Activated naive CD4-positive, alpha-beta T cell treated with anti-CD3 and anti-CD28 coated beads for 36 hours (primary cell): ENCODE measurements at regions of chr5 and their contacts with region 1.

Region 1: DNA sequence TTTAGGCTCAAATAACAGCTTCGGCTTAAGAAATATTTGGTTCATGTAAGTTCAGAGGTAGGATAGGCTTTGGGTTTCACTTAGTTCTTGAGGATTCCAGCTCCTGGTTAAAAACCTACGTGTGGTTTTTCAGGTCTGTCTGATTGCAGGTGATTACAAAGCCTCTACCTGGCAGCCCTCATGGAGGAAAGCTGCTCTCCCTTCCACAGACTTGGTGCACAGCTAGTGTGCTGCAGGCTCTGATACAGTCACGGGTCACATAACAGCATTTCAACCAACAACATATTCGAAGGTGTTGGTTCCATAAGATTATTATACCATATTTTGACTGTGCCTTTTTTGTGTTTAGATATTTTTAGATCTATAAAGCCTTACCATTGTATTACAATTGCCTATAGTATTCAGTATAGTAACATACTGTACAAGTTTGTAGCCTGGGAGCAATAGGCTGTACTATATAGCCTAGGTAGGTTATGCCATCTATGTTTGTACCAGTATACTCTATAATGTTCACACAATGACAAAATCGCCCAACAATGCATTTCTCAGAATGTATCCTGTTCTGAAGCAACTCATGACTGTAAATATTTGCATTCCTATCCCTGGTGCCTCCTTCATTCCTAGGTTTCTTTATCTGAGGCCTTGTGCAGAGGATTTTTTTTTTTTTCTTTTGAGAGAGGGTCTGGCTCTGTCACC is 8.0 kb upstream of the DCP2 start:
- DNase-seq: no peak
- H3K4me3 Mint-ChIP-seq: no peak overlapping the region
- H3K27ac Mint-ChIP-seq: no peak overlapping the region
- H3K4me1 Mint-ChIP-seq: peaks cover 18% of the 10 kb centered on the region
- H3K27me3 Mint-ChIP-seq: no peaks in the 10 kb centered on the region

Region 2: GRCh38 chr5:112691758-112692157 is 276.8 kb before region 1 on chr5:
- CTCF ChIA-PET with region 1: interaction called, 6 read pairs
- intact Hi-C with region 1: loop called (anchors 1 kb)
- DNase-seq: peak; percentile 63
- H3K4me3 Mint-ChIP-seq: no peak overlapping the region
- H3K27ac Mint-ChIP-seq: no peak overlapping the region
- H3K4me1 Mint-ChIP-seq: no peaks in the 10 kb centered on the region
- H3K27me3 Mint-ChIP-seq: peaks cover 4% of the 10 kb centered on the region

Region 3: DNA sequence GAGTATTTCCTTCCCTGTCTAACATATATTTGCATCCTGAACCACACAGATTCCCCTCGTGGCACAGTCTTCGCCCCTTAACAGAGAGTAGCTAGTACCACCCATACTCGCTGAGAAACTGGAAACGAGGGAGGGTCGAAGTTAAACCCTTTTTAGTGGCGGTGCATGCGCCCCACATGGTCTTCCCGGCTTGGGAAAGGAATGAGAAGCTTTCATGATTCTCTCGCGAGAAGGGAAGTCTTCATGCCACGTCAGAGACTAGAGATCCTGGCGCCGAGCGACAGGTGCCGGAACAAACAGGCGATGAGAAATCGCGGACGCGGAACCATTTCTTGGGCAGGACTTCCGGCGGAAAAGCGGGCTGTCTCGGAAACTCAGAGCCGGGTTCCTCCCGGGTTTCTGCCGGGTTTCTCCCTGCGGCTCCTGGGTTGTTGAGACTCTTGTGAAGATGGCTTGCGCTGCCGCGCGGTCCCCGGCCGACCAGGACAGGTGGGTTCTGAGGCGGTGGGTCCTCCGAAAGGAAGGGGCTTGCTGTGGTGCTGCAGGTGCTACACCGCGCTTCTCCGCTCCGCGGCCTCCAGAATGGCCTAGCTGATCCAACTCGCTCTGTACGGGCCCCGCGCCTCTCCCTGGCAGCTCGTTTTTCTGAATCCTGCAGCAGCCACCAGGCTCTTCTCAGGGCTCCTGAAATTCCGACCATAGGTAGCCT is 107.5 kb before region 1 on chr5 and contains the start of gene SRP19:
- CTCF ChIA-PET with region 1: no interaction called
- intact Hi-C with region 1: loop called (anchors 1 kb)
- DNase-seq: peak; percentile 96
- H3K4me3 Mint-ChIP-seq: peak within 1 kb of the TSS; percentile 96
- H3K27ac Mint-ChIP-seq: peak within 1 kb of the TSS; percentile 95
- H3K4me1 Mint-ChIP-seq: peaks cover 30% of the 10 kb centered on the region
- H3K27me3 Mint-ChIP-seq: peaks cover 9% of the 10 kb centered on the region
- total RNA-seq, gene SRP19: 43.7 to 49.6 TPM

Region 4: DNA sequence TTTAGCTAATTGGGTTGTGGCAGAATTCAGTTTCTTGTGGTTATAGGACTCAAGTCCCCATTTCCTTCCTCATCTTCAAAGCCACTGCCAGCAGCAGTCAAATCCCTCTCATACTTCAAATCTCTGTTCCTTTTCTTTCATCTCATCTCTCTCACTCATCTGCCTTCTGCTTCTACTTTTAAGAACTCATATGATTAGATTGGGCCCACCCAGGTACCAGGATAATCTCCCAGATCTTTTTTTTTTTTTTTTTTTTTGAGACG is 38.5 kb before region 1 on chr5:
- CTCF ChIA-PET with region 1: no interaction called
- intact Hi-C with region 1: loop called (anchors 1 kb)
- DNase-seq: no peak
- H3K4me3 Mint-ChIP-seq: no peak overlapping the region
- H3K27ac Mint-ChIP-seq: no peak overlapping the region
- H3K4me1 Mint-ChIP-seq: peaks cover 39% of the 10 kb centered on the region
- H3K27me3 Mint-ChIP-seq: no peaks in the 10 kb centered on the region